Activated T-helper 2 cell treated with anti-CD3 and anti-CD28 coated beads, Interferon-gamma antibody, Interleukin-2, Interleukin-4, amounts not matched to agents 10 μg/mL and 5 μg/mL and 100 μg/mL, durations not matched to agents 14 hours and 24 hours and 36 hours (primary cell): ENCODE measurements at regions of chr10 and their contacts with region 1.

Region 1: DNA sequence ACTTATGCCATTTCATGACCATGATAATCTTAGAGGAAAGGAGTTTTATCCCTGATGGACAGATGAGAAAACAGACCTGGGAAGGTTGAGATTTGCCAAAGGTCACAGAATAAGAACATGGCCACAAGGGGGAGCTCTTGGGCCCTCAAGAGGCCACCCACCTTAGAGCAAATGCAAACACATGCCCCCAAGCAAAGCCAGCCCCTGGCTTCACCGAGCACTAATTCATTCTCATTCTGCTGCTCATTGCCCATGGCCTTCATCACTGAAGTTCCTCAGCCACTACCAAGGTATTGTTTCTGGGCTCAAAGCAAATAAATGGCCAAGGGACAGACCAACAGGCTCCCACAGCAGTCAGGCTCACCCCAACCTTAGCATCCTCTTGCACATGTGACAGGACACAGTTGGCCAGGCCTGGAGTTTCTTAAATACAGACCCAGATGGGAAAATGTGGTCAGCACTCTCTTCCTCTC is 44.2 kb downstream of the PDLIM1 start:
- DNase-seq: peak; percentile 50
- H3K4me3 Mint-ChIP-seq: no peak overlapping the region
- H3K27ac Mint-ChIP-seq: no peak overlapping the region
- H3K4me1 Mint-ChIP-seq: peaks cover 33% of the 10 kb centered on the region
- H3K27me3 Mint-ChIP-seq: peaks cover 2% of the 10 kb centered on the region

Region 2: DNA sequence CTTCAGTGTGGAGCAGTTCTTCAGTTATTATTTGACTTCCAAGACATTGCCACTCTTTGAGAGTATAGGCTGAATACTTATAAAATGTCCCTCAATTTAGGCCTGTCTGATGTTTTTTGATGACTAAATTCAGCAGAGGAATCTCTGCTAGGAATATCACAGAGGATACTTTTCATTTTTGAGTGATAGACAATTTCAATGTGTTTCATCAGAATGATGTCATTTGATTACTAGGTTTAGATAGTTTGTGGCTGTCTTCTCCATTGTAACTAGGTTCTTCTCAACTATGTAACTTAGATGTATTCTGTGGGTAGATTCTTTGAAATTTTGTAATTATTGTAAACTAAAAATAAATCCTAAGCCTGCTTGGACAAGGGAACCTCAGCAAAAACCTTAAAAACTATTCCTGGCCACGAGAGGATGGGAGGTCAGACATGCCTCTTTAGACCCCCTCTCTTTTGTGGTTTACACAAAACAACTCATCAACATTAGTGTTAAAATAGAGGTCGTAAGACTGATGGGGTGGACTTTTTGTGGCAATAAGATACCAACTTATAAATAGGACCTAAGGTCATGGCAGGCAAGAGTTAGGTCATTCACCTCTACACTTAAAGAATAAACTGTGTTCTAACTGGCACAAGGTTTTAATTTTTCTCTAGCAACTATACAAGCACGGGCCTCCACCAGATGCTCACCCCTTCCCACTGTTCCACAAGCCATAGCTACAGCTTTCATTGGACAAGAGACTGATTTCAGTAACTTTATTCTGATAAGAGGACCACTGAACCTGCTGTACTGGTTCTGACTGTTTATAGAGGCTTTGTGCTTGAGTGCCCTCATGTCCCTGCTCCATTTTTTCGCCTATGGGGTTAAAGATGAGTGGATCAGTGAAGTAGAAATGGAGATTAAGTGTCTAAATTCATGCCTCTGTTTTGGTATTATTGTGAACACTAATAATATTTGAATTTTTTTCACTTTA is 211.0 kb before region 1 on chr10:
- intact Hi-C with region 1: no loop called
- DNase-seq: no peak
- H3K4me3 Mint-ChIP-seq: no peak overlapping the region
- H3K27ac Mint-ChIP-seq: no peak overlapping the region
- H3K4me1 Mint-ChIP-seq: no peaks in the 10 kb centered on the region
- H3K27me3 Mint-ChIP-seq: no peaks in the 10 kb centered on the region

Region 3: DNA sequence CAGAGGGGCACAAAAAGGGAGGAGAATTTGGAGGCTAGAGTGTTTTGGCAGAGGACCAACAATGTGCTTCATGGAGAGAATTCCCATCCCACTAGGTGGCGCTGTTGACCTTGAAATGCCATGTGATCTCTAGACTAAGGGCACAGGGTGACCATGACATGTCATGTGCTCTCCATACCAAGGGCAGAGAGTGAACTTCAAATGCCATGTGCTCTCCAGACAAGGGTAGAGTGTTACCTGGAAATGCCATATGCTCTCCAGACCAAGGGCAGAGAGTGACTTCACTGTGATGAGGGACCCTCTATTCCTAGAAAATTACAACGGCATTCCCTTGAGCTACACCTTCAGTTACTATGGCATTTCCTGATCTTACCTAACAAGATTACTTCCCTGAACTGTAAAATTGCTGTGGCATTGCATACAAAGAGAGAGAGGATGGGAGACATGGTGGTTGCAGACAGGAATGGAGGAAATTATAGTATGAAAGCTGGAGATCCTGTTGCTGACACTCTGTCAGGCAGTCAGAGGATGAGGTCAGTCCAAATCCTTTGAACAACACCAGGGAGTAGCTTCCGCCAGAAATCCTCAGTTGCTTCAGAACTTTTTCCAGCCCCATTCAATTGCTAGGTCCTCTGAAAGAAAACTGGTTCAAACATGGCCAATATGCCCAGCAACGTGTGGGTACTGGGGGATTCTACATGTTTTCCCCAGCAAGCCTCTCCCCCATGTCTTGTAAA is 113.4 kb before region 1 on chr10:
- intact Hi-C with region 1: loop called (anchors 1 kb)
- DNase-seq: peak; percentile 61
- H3K4me3 Mint-ChIP-seq: no peak overlapping the region
- H3K27ac Mint-ChIP-seq: no peak overlapping the region
- H3K4me1 Mint-ChIP-seq: no peaks in the 10 kb centered on the region
- H3K27me3 Mint-ChIP-seq: peaks cover 1% of the 10 kb centered on the region

Region 4: DNA sequence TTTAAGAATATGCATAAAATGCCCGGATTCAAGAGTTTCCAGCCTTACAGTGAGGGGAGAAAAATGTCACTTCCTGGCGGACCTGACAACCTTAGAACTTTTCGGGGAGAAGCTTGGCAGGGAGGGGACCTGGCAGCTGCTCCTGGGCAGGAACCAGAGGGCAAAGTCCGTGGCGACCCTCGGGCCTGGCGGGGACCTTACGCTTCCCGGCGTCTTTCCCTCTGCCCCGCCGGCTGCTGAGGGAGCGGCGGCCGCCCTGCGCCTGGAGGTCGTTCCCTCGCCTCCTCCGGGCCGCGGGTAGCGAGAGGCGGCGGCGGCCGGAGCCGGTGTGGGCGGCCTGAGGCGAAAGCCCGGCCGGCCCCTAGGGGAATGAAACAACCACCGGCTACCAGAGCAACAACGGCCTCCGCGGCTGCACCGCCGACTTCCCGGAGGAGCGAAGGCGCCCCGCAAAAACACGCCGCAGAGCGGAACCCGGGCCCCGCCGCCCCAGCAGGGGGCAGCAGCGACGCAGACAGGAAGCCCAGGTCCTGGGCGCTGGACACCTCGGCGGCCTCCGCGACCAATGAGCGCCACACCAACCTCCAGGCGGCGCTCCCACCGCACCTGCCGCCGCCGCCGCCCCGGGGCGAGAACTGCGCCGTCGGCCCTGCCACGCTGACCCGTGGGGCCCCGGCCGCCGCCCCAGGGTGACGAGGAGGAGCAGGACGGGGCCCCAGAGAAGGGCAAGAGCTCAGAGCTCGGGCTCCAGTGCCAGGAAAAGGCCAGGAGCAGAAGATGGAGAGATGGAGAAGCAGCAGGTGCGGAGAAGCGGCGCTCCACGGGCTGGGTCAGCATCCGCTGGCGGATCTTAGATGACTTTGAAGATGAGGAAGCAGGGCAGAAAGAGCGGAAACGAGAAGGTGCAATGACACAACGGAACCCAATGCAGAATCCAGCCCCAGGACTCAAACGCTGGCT is 63.1 kb before region 1 on chr10:
- intact Hi-C with region 1: loop called (anchors 1 kb)
- DNase-seq: peak; percentile 76
- H3K4me3 Mint-ChIP-seq: peak overlapping the region; percentile 79
- H3K27ac Mint-ChIP-seq: peak overlapping the region; percentile 43
- H3K4me1 Mint-ChIP-seq: peaks cover 6% of the 10 kb centered on the region
- H3K27me3 Mint-ChIP-seq: peaks cover 40% of the 10 kb centered on the region

Region 5: DNA sequence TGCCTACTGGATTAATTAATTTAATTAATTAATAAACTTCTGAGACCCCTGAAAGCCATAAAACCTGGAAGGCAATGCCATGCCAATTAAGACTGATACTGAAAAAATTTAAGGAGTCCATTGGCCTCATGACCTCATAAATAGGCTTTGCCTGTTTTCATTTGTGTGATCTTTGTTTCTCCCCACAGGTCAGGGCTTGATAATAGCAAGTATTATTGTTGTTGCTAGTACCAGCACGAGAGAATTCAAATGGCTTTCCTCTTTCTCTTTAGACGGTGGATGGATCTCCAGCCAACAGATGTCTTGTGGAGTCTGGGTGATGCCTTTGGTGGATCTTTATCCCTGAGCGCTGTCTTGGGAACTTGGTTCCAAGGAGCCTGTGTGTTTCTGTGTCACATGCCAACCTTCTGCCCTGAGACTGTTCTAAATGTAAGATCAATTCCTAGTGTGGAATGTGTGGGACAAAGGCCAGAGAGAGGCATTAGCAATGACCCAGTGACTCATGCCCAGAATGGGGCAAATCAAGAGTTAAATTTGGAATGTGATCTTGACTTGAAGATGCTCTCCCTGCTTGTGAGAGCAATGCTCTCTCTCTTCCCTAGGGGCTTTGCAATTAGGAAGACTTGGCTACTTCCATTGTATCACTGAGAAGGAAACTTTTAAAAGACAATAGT is 34.9 kb before region 1 on chr10:
- intact Hi-C with region 1: loop called (anchors 2 kb)
- DNase-seq: no peak
- H3K4me3 Mint-ChIP-seq: no peak overlapping the region
- H3K27ac Mint-ChIP-seq: no peak overlapping the region
- H3K4me1 Mint-ChIP-seq: peaks cover 8% of the 10 kb centered on the region
- H3K27me3 Mint-ChIP-seq: peaks cover 15% of the 10 kb centered on the region

Region 6: GRCh38 chr10:95290461-95291364 is 44.1 kb after region 1 on chr10 and contains the start of gene PDLIM1:
- intact Hi-C with region 1: loop called (anchors 2 kb)
- DNase-seq: peak; percentile 59
- H3K4me3 Mint-ChIP-seq: peak within 1 kb of the TSS; percentile 78
- H3K27ac Mint-ChIP-seq: no peak within 1 kb of the TSS
- H3K4me1 Mint-ChIP-seq: peaks cover 27% of the 10 kb centered on the region
- H3K27me3 Mint-ChIP-seq: peaks cover 45% of the 10 kb centered on the region
- total RNA-seq, gene PDLIM1: 2.7 and 2.9 TPM in 2 replicates

Region 7: DNA sequence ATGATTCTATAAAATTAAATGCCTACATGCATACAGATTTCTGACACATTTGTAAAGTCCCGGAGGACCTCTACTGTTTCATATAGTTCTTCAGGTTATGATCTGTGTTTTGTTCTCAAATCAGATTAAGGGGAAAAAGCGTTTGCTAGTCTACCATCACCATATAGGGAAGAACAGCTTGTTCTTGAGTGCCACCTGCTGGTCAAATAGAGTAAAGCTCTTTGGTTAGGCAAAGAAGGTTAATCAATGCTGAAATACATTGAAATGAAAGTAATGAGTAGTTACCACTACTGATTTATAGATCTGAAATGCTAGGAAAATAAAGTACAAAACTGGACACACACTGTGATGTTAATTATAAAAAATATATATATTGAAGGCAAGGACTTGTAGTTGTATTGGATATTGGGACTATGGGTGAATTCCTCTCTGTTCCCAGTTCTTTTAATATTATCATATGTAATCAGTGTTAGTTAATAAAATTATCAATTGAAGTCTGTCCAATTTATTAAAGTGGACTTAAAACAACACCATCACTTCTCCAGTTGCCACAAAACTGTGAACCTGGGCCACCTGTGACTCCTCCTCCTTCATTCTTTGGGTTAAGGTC is 116.8 kb after region 1 on chr10:
- intact Hi-C with region 1: loop called (anchors 1 kb)
- DNase-seq: peak; percentile 32
- H3K4me3 Mint-ChIP-seq: no peak overlapping the region
- H3K27ac Mint-ChIP-seq: no peak overlapping the region
- H3K4me1 Mint-ChIP-seq: peaks cover 2% of the 10 kb centered on the region
- H3K27me3 Mint-ChIP-seq: peaks cover 17% of the 10 kb centered on the region